ENCODE measurements at regions of chr13 and their contacts with region 1.

Region 1: GRCh38 chr13:27022571-27023311 is 148.9 kb downstream of the USP12 start:
- DNase-seq: peak; percentile 89
- ATAC-seq: peak; percentile 91
- H3K4me3 ChIP-seq: no peak overlapping the region
- H3K27ac ChIP-seq: peak overlapping the region; percentile 78
- H3K4me1 ChIP-seq: peaks cover 20% of the 10 kb centered on the region
- H3K27me3 ChIP-seq: peaks cover 6% of the 10 kb centered on the region
- CTCF ChIP-seq: no peak
- POLR2A ChIP-seq: no peak
- RAD21 ChIP-seq: no peak

Region 2: GRCh38 chr13:27035982-27036981 is 13.5 kb after region 1 on chr13:
- CTCF ChIA-PET with region 1: interaction called, 7 read pairs
- POLR2A ChIA-PET with region 1: no interaction called
- dilution Hi-C with region 1: no loop called
- in situ Hi-C with region 1: no loop called
- intact Hi-C with region 1: loop called (anchors 2 kb)
- DNase-seq: peak; percentile 56
- ATAC-seq: peak; percentile 55
- H3K4me3 ChIP-seq: no peak overlapping the region
- H3K27ac ChIP-seq: peak overlapping the region; percentile 25; the same call in 1 of the 2 replicates
- H3K4me1 ChIP-seq: peaks cover 23% of the 10 kb centered on the region
- H3K27me3 ChIP-seq: no peaks in the 10 kb centered on the region
- CTCF ChIP-seq: no peak
- POLR2A ChIP-seq: no peak
- RAD21 ChIP-seq: no peak

Region 3: GRCh38 chr13:27977476-27978300 is 954.9 kb after region 1 on chr13:
- CTCF ChIA-PET with region 1: no interaction called
- POLR2A ChIA-PET with region 1: no interaction called
- dilution Hi-C with region 1: no loop called
- in situ Hi-C with region 1: no loop called
- intact Hi-C with region 1: no loop called
- DNase-seq: no peak
- ATAC-seq: no peak
- H3K4me3 ChIP-seq: no peak overlapping the region
- H3K27ac ChIP-seq: no peak overlapping the region
- H3K4me1 ChIP-seq: no peaks in the 10 kb centered on the region; the same call in 1 of the 2 replicates
- H3K27me3 ChIP-seq: peaks cover 94% of the 10 kb centered on the region
- CTCF ChIP-seq: no peak
- POLR2A ChIP-seq: no peak
- RAD21 ChIP-seq: no peak

Measured in IMR-90 (cell line).